Activated naive CD4-positive, alpha-beta T cell treated with anti-CD3 and anti-CD28 coated beads, Interleukin-2, amount 10 ng/mL, durations not matched to agents 7 days and 5 days (primary cell): ENCODE measurements at regions of chr3 and their contacts with region 1.

Region 1: GRCh38 chr3:112990672-112991602 is at the start of gene GTPBP8:
- DNase-seq: peak; percentile 89
- H3K4me3 Mint-ChIP-seq: peak within 1 kb of the TSS; percentile 91
- H3K27ac Mint-ChIP-seq: peak within 1 kb of the TSS; percentile 98
- H3K4me1 Mint-ChIP-seq: peaks cover 66% of the 10 kb centered on the region
- H3K27me3 Mint-ChIP-seq: peaks cover 3% of the 10 kb centered on the region

Region 2: GRCh38 chr3:112958811-112959560 is 32.0 kb before region 1 on chr3:
- CTCF ChIA-PET with region 1: no interaction called
- DNase-seq: no peak
- H3K4me3 Mint-ChIP-seq: no peak overlapping the region
- H3K27ac Mint-ChIP-seq: no peak overlapping the region
- H3K4me1 Mint-ChIP-seq: peaks cover 21% of the 10 kb centered on the region
- H3K27me3 Mint-ChIP-seq: no peaks in the 10 kb centered on the region

Region 3: DNA sequence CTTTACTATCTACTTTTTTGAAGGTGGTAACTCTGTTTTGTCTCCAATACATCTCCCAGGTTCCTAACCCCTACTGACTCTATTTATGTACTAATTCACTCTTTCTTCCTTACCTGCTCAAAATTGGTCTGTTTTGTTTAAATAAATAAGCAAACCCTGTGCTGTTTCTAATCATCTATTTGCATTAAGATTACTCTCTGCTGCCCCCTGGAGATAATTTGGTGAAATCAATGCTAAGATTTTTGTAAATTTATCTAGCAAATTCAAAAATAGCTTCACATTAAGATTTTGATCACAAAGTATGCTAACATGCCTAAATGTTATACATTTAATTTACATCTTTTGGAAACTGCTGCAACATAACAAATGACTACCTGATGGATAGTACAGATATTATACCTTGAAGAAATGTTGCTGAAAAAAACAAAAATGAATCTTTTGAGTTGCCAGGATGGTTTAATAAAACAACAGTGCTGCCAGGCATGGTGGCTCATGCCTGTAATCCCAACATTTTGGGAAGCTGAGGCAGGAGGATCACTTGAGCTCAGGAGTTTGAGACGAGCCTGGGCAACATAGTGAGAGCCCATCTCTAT is 11.6 kb before region 1 on chr3:
- CTCF ChIA-PET with region 1: interaction called, 20 read pairs
- DNase-seq: no peak
- H3K4me3 Mint-ChIP-seq: no peak overlapping the region
- H3K27ac Mint-ChIP-seq: no peak overlapping the region
- H3K4me1 Mint-ChIP-seq: peaks cover 55% of the 10 kb centered on the region
- H3K27me3 Mint-ChIP-seq: no peaks in the 10 kb centered on the region

Region 4: GRCh38 chr3:113002679-113003078 is 11.7 kb after region 1 on chr3:
- CTCF ChIA-PET with region 1: interaction called, 13 read pairs
- DNase-seq: peak; percentile 65
- H3K4me3 Mint-ChIP-seq: no peak overlapping the region
- H3K27ac Mint-ChIP-seq: peak overlapping the region; percentile 60
- H3K4me1 Mint-ChIP-seq: peaks cover 71% of the 10 kb centered on the region
- H3K27me3 Mint-ChIP-seq: no peaks in the 10 kb centered on the region